ENCODE measurements at regions of chr15 and their contacts with region 1.

Region 1: DNA sequence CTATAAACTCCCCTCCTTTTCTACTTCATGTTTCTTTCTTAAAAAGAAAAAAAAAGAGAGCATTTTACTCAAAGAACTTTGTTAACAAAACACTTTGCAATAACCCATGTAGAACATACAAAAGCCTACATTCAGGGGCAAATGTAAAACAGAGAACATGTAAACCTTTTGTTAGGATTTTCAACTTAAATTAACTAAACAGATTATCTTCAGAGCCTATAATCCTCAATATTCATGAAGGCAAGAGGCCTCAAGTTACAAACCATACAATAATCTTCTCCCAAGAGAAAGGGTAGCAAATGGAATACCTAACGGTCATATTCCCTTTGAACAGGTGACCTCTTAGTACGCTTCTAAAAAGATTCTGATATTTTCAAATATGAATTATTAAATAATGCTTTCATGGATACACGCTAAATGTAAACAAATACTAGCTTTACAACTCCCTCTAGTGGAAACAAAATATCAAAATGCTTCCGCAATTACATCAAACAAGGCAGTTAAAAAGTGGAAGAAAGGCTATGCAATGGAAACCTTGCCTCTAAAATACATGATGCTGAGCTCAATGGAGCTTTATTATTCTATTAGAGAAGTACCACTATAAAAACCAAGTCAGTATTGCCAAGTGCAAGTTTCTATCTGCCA is 9.9 kb downstream of the CEP152 start:
- DNase-seq: no peak
- H3K4me3 ChIP-seq: no peak overlapping the region
- H3K27ac ChIP-seq: no peak overlapping the region
- H3K4me1 ChIP-seq: no peaks in the 10 kb centered on the region
- H3K27me3 ChIP-seq: no peaks in the 10 kb centered on the region
- CTCF ChIP-seq: peak; percentile 60

Region 2: GRCh38 chr15:48343865-48344264 is 457.1 kb before region 1 on chr15:
- CTCF ChIA-PET with region 1: no interaction called
- POLR2A ChIA-PET with region 1: no interaction called
- intact Hi-C with region 1: no loop called
- DNase-seq: no peak
- H3K4me3 ChIP-seq: no peak overlapping the region
- H3K27ac ChIP-seq: no peak overlapping the region
- H3K4me1 ChIP-seq: no peaks in the 10 kb centered on the region
- H3K27me3 ChIP-seq: no peaks in the 10 kb centered on the region
- CTCF ChIP-seq: no peak

Region 3: DNA sequence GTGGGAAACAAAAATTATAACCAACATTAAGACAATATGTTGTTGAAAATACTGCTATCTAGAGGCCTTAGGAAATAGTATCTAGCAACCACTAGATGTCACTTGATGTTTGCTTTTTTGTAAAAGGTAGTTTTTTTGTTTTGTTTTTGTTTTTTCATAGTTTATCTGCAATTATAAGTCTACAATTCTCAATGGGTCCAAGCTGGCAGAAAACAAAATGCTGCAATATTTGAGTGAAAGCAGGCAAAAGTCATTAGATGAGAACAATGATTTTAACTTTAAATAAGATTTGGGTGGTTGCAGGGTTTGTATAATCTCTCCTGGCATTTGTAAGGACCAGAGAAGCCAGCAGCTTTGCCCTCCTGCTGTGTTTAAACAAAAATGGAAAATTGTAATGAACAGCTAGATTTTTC is 442.7 kb before region 1 on chr15:
- CTCF ChIA-PET with region 1: interaction called, 3 read pairs
- POLR2A ChIA-PET with region 1: no interaction called
- intact Hi-C with region 1: loop called (anchors 1 kb)
- DNase-seq: no peak
- H3K4me3 ChIP-seq: no peak overlapping the region
- H3K27ac ChIP-seq: no peak overlapping the region
- H3K4me1 ChIP-seq: no peaks in the 10 kb centered on the region
- H3K27me3 ChIP-seq: no peaks in the 10 kb centered on the region
- CTCF ChIP-seq: peak; percentile 70

Region 4: GRCh38 chr15:48366584-48367312 is 434.2 kb before region 1 on chr15:
- CTCF ChIA-PET with region 1: interaction called, 10 read pairs
- POLR2A ChIA-PET with region 1: interaction called, 4 read pairs
- intact Hi-C with region 1: no loop called
- DNase-seq: no peak
- H3K4me3 ChIP-seq: no peak overlapping the region
- H3K27ac ChIP-seq: no peak overlapping the region
- H3K4me1 ChIP-seq: peaks cover 6% of the 10 kb centered on the region; the same call in 1 of the 2 replicates
- H3K27me3 ChIP-seq: no peaks in the 10 kb centered on the region
- CTCF ChIP-seq: no peak

Region 5: GRCh38 chr15:48627260-48627960 is 173.5 kb before region 1 on chr15:
- CTCF ChIA-PET with region 1: no interaction called
- POLR2A ChIA-PET with region 1: no interaction called
- intact Hi-C with region 1: no loop called
- DNase-seq: no peak
- H3K4me3 ChIP-seq: no peak overlapping the region
- H3K27ac ChIP-seq: no peak overlapping the region
- H3K4me1 ChIP-seq: no peaks in the 10 kb centered on the region
- H3K27me3 ChIP-seq: no peaks in the 10 kb centered on the region
- CTCF ChIP-seq: no peak

Region 6: GRCh38 chr15:48710952-48711495 is 89.9 kb before region 1 on chr15:
- CTCF ChIA-PET with region 1: no interaction called
- POLR2A ChIA-PET with region 1: no interaction called
- intact Hi-C with region 1: no loop called
- DNase-seq: no peak
- H3K4me3 ChIP-seq: no peak overlapping the region
- H3K27ac ChIP-seq: no peak overlapping the region
- H3K4me1 ChIP-seq: no peaks in the 10 kb centered on the region
- H3K27me3 ChIP-seq: no peaks in the 10 kb centered on the region
- CTCF ChIP-seq: no peak

Region 7: GRCh38 chr15:48832648-48833047 is 31.7 kb after region 1 on chr15:
- CTCF ChIA-PET with region 1: interaction called, 10 read pairs
- POLR2A ChIA-PET with region 1: no interaction called
- intact Hi-C with region 1: no loop called
- DNase-seq: no peak
- H3K4me3 ChIP-seq: no peak overlapping the region
- H3K27ac ChIP-seq: no peak overlapping the region
- H3K4me1 ChIP-seq: no peaks in the 10 kb centered on the region
- H3K27me3 ChIP-seq: no peaks in the 10 kb centered on the region
- CTCF ChIP-seq: no peak

Measured in PC-9 (cell line).